ENCODE measurements at regions of chr3 and their contacts with region 1.

Region 1: DNA sequence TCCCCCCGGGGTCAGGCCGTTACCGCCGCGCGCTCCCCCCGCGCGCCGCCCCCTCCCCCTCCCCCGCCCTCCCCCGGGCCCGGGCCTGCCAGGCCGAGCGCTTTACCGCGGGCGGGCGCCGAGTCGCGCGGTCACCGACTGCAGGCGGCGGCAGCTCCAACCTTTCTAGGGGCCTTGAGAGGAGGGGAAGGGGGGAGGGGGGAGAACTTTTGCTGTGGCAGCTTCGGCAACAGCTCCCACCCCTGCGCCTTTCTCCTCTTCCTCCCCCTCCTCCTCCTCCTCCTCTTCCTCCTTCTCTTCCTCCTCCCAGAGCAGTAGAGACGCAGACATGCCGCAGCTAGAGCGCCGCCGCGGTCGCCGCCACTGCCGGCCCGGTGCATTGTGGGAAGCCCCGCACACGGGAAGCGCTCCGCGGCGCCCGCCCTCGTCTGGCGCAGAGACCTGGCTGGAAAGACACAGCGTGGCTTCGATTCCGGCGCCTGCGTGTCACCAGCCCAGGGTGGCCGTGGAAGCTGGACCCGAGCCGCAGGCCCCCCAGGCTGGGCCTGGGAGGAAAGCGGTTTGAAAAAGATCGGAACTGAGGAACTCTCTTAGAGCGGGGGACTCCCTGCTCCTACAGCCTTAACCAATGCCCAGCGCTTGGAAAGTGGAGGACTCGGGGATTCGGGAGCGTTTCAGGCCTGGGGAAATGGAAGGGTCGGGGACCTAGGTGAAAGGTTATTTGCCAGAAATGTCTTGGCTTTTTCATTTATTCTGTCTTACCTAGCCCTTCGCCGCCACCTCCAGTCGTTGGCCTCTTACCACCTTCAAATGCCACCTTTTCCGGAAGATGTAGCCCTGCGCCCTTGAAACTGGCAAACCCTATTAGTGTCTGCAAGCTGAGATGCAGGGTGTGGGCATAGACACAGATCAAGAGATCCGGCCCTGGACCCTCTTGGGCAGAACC is at the start of gene ZNF148:
- DNase-seq: peak; percentile 91
- H3K4me3 Mint-ChIP-seq: peak within 1 kb of the TSS; percentile 92
- H3K27ac Mint-ChIP-seq: peak within 1 kb of the TSS; percentile 96
- H3K4me1 Mint-ChIP-seq: peaks cover 34% of the 10 kb centered on the region
- H3K27me3 Mint-ChIP-seq: no peaks in the 10 kb centered on the region
- total RNA-seq, gene ZNF148: 20.3 to 22.2 TPM

Region 2: GRCh38 chr3:123584988-123585937 is 1790.0 kb before region 1 on chr3 and contains the start of gene HACD2:
- CTCF ChIA-PET with region 1: no interaction called
- intact Hi-C with region 1: loop called (anchors 10 kb)
- DNase-seq: peak; percentile 96
- H3K4me3 Mint-ChIP-seq: no peak within 1 kb of the TSS
- H3K27ac Mint-ChIP-seq: peak within 1 kb of the TSS; percentile 57
- H3K4me1 Mint-ChIP-seq: peaks cover 22% of the 10 kb centered on the region
- H3K27me3 Mint-ChIP-seq: no peaks in the 10 kb centered on the region
- total RNA-seq, gene HACD2: 25.9 TPM

Region 3: DNA sequence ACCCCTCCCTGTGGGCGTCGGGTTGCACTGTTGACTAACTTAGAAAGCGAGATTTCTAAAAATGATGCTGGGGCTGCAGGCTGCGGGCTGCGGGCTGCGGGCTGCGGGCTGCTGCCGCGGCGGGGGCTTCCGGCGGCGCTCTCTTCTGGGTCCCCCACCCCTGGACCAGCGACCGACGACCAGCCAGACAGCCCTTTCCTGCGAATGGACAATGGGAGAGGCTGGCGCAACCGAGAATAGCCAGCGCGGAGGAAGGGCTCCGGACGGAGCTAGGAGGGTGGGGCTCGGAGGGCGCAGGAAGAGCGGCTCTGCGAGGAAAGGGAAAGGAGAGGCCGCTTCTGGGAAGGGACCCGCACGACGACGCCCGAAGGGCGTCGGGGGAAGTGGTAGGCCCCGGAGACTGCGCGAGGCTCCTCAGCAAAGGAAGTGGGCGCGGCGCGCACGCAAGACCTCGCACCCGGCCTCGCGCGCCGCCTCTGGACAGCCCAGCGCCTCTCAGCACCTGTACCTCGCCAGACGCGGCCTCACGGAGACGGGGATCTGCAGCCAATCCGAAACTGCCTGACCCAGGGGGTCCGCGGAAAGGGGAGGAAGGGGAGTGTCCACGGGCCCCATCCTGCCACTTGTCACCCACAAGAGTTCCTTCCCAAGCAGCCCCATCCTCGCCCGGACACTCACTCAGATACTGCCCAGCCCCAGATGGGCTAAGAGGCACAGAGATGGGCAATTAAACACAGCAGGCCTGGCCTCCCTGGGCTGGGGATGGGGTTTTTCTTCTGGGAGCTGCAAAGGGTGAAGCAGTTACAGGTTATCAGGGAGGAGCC is 233.5 kb before region 1 on chr3:
- CTCF ChIA-PET with region 1: no interaction called
- intact Hi-C with region 1: loop called (anchors 5 kb)
- DNase-seq: peak; percentile 84
- H3K4me3 Mint-ChIP-seq: peak overlapping the region; percentile 67
- H3K27ac Mint-ChIP-seq: peak overlapping the region; percentile 50
- H3K4me1 Mint-ChIP-seq: peaks cover 34% of the 10 kb centered on the region
- H3K27me3 Mint-ChIP-seq: peaks cover 22% of the 10 kb centered on the region

Region 4: GRCh38 chr3:125313060-125313635 is 62.1 kb before region 1 on chr3:
- CTCF ChIA-PET with region 1: no interaction called
- intact Hi-C with region 1: loop called (anchors 1 kb)
- DNase-seq: peak; percentile 22
- H3K4me3 Mint-ChIP-seq: no peak overlapping the region
- H3K27ac Mint-ChIP-seq: peak overlapping the region; percentile 9
- H3K4me1 Mint-ChIP-seq: peaks cover 51% of the 10 kb centered on the region
- H3K27me3 Mint-ChIP-seq: no peaks in the 10 kb centered on the region

Region 5: DNA sequence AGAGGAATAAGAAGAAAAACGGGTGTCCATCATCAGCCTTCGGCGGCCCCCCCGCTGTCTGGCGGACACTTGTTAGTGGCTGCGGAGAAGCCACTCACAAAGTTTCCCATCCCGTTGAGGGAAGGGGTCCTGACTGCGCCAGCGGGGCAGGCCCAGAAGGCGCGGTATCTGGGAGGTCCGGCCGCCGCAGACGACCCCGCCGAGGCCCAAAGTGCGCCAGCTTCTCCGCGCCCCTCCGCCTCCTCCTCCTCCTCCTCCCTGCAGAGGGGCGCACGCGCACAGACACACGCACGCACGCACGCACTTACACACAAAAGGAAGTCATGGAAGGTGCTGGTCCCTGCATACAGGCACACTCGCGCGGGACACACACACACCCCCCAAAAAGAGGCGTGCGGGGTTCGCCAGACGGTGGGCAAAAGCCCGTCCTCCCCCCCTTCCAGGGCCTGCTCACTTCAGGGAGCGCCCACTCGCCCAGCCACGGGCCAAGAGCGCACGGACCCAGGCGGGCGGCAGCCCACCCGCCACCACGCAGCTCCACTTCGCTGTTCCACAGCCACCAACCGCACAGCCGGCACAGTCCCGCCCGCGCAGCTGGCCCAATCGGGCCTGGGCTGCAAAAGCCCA is 18.1 kb before region 1 on chr3:
- CTCF ChIA-PET with region 1: no interaction called
- intact Hi-C with region 1: loop called (anchors 1 kb)
- DNase-seq: peak; percentile 69
- H3K4me3 Mint-ChIP-seq: peak overlapping the region; percentile 71
- H3K27ac Mint-ChIP-seq: peak overlapping the region; percentile 78
- H3K4me1 Mint-ChIP-seq: peaks cover 54% of the 10 kb centered on the region
- H3K27me3 Mint-ChIP-seq: no peaks in the 10 kb centered on the region

Region 6: DNA sequence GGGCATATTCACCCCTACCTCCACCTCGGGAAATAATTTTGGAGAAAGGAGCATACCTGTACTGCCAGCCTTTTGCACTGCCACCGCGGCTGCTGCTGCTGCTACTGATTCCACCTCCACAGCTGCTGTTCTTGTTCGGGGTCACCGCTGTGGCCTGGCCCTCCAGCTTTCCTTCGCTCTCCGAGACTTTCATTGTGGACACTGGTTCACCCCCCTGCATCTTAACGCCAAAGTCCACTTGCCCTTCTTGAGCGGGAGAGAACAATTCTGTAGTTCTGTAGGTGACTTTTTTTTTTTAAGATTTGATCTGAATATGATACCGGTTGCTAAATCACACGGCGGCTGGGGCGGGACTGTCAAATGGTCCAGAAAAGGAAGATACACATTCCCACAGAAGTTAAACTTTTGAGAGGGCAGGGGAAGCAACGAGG is 219.3 kb after region 1 on chr3:
- CTCF ChIA-PET with region 1: no interaction called
- intact Hi-C with region 1: loop called (anchors 5 kb)
- DNase-seq: peak; percentile 14
- H3K4me3 Mint-ChIP-seq: peak overlapping the region; percentile 99
- H3K27ac Mint-ChIP-seq: peak overlapping the region; percentile 88
- H3K4me1 Mint-ChIP-seq: peaks cover 38% of the 10 kb centered on the region
- H3K27me3 Mint-ChIP-seq: no peaks in the 10 kb centered on the region